ENCODE measurements at regions of chr2 and their contacts with region 1.

Region 1: GRCh38 chr2:68709421-68709911 is 25.1 kb upstream of the ARHGAP25 start:
- DNase-seq: no peak
- ATAC-seq: peak; percentile 96
- H3K4me3 Mint-ChIP-seq: no peak overlapping the region
- H3K27ac Mint-ChIP-seq: no peak overlapping the region
- H3K4me1 Mint-ChIP-seq: peaks cover 6% of the 10 kb centered on the region
- H3K27me3 Mint-ChIP-seq: no peaks in the 10 kb centered on the region
- CTCF ChIP-seq: peak; percentile 51; the same call in 1 of the 2 replicates

Region 2: GRCh38 chr2:68467077-68467960 is 242.1 kb before region 1 on chr2 and contains the starts of genes APLF and FBXO48:
- CTCF ChIA-PET with region 1: interaction called, 27 read pairs
- POLR2A ChIA-PET with region 1: no interaction called
- DNase-seq: peak; percentile 94
- ATAC-seq: peak; percentile 99
- H3K4me3 Mint-ChIP-seq: peak within 1 kb of the TSS; percentile 97
- H3K27ac Mint-ChIP-seq: peak within 1 kb of the TSS; percentile 77
- H3K4me1 Mint-ChIP-seq: peaks cover 10% of the 10 kb centered on the region; the same call in 1 of the 2 replicates
- H3K27me3 Mint-ChIP-seq: no peaks in the 10 kb centered on the region
- CTCF ChIP-seq: no peak
- total RNA-seq, gene APLF: 2.7 to 4.0 TPM (median 3.9 TPM) in 3 replicates
- total RNA-seq, gene FBXO48: 1.3 to 1.5 TPM (median 1.3 TPM) in 3 replicates

Region 3: GRCh38 chr2:68643011-68643873 is 66.2 kb before region 1 on chr2 and contains the start of gene PROKR1:
- CTCF ChIA-PET with region 1: interaction called, 17 read pairs
- POLR2A ChIA-PET with region 1: no interaction called
- DNase-seq: peak; percentile 72
- ATAC-seq: peak; percentile 73
- H3K4me3 Mint-ChIP-seq: peak within 1 kb of the TSS; percentile 80
- H3K27ac Mint-ChIP-seq: no peak within 1 kb of the TSS
- H3K4me1 Mint-ChIP-seq: peaks cover 15% of the 10 kb centered on the region
- H3K27me3 Mint-ChIP-seq: peaks cover 45% of the 10 kb centered on the region
- CTCF ChIP-seq: no peak
- total RNA-seq, gene PROKR1: 2.6 to 4.4 TPM (median 2.8 TPM) in 3 replicates

Region 4: DNA sequence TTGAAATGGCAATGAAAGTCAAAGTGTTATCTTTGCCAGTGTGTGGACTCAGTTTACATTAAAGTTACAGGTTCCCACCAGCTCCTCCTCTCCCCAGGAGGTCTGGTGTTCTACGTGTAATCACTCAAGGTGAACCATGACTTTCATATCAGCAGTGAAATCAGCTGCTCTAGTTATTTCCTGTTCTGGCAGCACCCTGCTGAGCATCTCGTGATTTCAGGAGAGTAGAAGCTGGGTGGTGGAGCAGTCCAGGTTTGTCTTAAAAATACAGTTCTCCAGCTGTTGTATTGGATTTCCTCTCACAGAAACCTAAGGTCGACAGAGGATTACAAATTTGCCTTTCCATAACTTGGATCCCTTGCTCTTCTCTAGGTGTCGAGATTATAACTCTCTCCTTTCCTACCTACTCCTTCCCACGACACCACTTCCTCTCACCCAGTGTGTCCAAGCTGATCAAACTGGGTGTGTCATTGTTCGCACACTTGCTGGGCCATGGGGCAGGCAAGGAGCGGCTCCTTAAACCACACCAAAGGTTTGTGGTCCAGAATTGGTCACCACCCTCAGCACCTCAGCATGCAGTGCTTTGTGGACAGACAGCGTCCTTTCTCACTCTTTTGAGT is 12.1 kb after region 1 on chr2:
- CTCF ChIA-PET with region 1: interaction called, 16 read pairs
- POLR2A ChIA-PET with region 1: interaction called, 3 read pairs
- DNase-seq: no peak
- ATAC-seq: no peak
- H3K4me3 Mint-ChIP-seq: no peak overlapping the region
- H3K27ac Mint-ChIP-seq: no peak overlapping the region
- H3K4me1 Mint-ChIP-seq: peaks cover 8% of the 10 kb centered on the region
- H3K27me3 Mint-ChIP-seq: no peaks in the 10 kb centered on the region
- CTCF ChIP-seq: no peak

Region 5: DNA sequence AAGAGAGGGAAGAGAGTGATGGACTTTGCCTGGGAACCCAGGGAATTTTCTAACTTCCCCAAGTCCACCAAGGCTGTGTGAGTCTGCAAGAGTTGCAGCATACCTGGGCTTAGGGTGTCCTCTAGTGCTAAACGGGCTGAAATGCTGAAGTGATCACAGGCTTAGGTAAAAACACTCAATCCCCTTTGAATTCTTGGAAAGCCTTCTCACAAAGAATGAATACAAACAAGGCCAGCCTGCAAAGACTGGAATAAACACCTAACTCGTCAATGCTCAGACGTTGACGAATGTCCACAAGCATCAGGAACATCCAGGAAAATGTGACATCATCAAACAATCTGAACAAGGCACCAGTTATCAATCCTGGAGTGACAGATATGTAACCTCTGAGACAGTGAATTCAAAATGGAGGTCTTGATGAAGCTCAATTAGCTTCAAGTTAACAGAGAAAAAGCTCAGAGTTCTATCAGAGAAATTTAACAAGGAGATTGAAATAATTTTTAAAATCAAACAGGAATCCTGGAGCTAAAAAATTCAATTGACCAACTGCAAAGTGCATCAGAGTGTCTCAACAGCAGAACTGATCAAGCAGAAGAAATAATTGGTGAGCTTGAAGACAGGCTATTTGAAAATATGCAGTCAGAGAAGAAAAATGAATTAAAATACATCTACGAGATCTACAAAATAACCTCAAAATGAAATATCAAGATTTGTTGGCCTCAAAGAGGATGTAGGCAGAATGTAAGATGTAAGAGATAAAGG is 191.9 kb after region 1 on chr2:
- CTCF ChIA-PET with region 1: interaction called, 12 read pairs
- POLR2A ChIA-PET with region 1: interaction called, 4 read pairs
- DNase-seq: peak; percentile 21
- ATAC-seq: peak; percentile 95
- H3K4me3 Mint-ChIP-seq: no peak overlapping the region
- H3K27ac Mint-ChIP-seq: no peak overlapping the region
- H3K4me1 Mint-ChIP-seq: no peaks in the 10 kb centered on the region
- H3K27me3 Mint-ChIP-seq: no peaks in the 10 kb centered on the region; the same call in none of the 2 replicates
- CTCF ChIP-seq: no peak

Region 6: DNA sequence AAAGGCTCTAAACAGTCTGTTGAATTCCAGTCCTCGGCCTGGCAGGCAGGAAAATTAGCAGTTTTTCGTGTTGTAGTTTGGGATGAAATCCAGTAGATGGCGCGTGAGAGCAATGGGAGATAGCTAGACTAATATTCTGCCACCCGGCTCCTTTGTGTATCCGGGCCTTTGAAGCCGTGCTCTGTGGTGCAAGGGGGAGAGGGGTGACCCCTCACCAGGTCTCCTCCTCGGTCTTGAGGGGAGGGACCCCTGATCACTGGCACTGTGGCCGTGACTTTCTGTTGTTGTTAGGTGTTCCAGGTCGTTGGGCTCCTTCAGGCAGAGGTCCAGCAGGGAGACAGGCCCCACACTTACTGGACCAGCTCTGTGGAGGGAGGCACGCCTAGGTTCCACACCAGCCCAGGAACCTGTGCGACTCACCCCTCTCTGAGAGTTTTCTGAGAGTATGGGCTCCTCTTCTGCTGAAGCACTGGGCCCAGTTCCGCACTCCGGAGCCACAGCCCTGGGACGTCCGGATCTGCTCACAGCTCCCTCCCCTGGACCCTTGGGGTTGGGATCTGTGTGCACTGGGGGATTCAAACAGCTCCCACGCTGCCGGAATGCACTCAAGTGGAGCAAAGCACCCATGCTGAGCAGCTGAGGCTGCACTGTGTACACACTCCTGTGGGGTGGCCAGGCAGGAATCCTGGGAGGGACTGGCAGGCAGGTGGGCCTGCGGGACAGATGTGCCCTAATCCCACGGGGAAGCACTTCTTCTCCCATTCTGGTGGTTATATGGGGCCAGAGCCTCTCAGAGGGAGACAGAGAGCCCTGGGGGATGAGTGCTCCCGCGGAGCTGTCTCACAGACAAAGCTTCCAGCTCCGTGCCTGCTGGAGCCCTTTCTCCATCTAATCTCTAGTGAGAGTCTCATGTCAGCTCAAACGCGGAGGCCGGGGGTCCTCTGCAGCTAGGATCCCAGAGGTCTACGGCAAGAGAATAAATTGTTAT is 234.4 kb after region 1 on chr2:
- CTCF ChIA-PET with region 1: interaction called, 11 read pairs
- POLR2A ChIA-PET with region 1: no interaction called
- DNase-seq: peak; percentile 70
- ATAC-seq: peak; percentile 93
- H3K4me3 Mint-ChIP-seq: peak overlapping the region; percentile 70
- H3K27ac Mint-ChIP-seq: no peak overlapping the region
- H3K4me1 Mint-ChIP-seq: peaks cover 12% of the 10 kb centered on the region
- H3K27me3 Mint-ChIP-seq: peaks cover 9% of the 10 kb centered on the region
- CTCF ChIP-seq: peak; percentile 73